Heart left ventricle (tissue), 16 donors: ENCODE measurements at regions of chr7 and their contacts with region 1.

Region 1: GRCh38 chr7:44240983-44241510 is 40.3 kb downstream of the YKT6 start:
- DNase-seq: peak; percentile 73 to 84 (median 78)
- ATAC-seq: peak; percentile 67 to 85 (median 80)
- H3K4me3 ChIP-seq: peak overlapping the region in 3 of 12 donors; percentile 5 to 28 (median 15)
- H3K27ac ChIP-seq: no peak overlapping the region
- H3K4me1 ChIP-seq: peaks cover 0 to 17% (median 0%) of the 10 kb centered on the region in 12 donors
- H3K27me3 ChIP-seq: no peaks in the 10 kb centered on the region
- CTCF ChIP-seq: peak; percentile 49 to 79 (median 68)
- POLR2A ChIP-seq: no peak

Region 2: GRCh38 chr7:43199371-43200160 is 1041.5 kb before region 1 on chr7:
- intact Hi-C with region 1: no loop called
- DNase-seq: no peak
- ATAC-seq: no peak
- H3K4me3 ChIP-seq: no peak overlapping the region
- H3K27ac ChIP-seq: no peak overlapping the region
- H3K4me1 ChIP-seq: no peaks in the 10 kb centered on the region
- H3K27me3 ChIP-seq: peaks cover 0 to 21% (median 7%) of the 10 kb centered on the region in 9 donors
- CTCF ChIP-seq: no peak
- POLR2A ChIP-seq: no peak

Region 3: DNA sequence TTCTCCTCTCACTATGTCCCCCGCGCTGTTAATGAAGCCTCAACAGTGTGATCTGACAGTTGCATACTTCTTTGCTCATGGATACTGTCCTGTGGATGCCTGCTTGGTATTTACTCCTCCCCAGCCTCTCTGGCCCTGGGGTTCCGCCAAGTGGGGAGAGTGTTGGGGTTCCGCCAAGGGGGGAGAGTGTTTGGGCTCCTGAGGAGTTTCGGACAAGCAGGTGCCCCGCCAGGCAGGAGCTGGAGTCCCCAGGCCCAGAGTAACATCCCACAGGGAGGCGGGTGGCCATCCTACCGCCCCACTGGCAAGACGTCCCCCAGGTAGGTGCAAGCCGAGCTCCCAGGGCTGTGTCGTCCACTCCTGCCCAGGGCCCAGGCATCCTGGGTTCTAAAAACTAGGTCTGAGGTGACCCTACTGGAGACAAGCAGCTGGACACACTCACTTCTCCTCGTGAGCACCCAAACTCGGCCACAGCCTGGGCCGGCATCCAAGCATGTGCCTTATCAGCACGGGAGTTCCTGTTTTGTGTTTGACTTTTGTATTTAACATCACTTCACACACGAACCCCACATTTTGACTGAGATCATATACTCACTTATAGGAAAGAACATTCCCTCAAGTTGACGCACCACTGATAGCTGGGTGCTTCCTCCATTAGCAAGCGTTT is 50.2 kb after region 1 on chr7:
- intact Hi-C with region 1: loop called in 1 of 10 experiments (anchors 5 kb)
- DNase-seq: peak; percentile 77 to 89 (median 88)
- ATAC-seq: peak; percentile 62 to 83 (median 69)
- H3K4me3 ChIP-seq: no peak overlapping the region
- H3K27ac ChIP-seq: peak overlapping the region; percentile 62 to 92 (median 82)
- H3K4me1 ChIP-seq: peaks cover 0 to 76% (median 49%) of the 10 kb centered on the region in 12 donors
- H3K27me3 ChIP-seq: peaks cover 0 to 4% (median 0%) of the 10 kb centered on the region in 9 donors
- CTCF ChIP-seq: no peak
- POLR2A ChIP-seq: no peak

Region 4: DNA sequence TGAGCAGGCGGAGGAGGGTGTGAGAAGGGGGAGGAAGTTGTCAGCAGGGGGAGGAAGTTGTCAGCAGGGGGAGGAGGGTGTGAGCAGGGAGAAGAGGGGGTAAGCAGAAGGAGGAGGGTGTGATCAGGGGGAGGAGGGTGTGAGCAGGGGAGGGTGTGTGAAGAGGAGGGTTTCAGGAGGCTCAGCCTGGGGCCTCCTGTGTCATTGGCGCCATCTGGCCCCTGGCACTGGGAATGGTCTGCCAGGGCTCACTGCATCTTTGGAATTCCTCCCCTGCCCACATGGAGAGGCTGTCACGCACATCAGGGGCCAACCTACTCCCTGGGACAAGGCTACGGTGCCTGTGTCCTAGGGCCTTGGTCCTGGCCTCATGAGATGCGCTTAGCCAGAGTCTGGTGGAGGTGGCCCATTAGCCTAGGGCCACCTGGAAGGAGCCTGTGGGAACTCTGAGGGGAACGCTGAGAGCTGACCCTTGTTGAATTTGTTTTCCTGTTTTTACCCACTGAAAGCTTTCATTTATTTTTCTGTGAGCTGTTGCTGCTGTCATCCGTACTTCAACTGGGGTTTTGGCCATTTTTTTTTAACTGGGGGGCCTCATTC is 66.4 kb after region 1 on chr7:
- intact Hi-C with region 1: loop called (anchors 2 to 5 kb)
- DNase-seq: peak in 3 of 5 donors; percentile 61 to 76 (median 76)
- ATAC-seq: peak; percentile 74 to 86 (median 76)
- H3K4me3 ChIP-seq: no peak overlapping the region
- H3K27ac ChIP-seq: peak overlapping the region in 6 of 12 donors; percentile 40 to 89 (median 58)
- H3K4me1 ChIP-seq: peaks cover 4 to 42% (median 19%) of the 10 kb centered on the region in 12 donors
- H3K27me3 ChIP-seq: peaks cover 0 to 24% (median 0%) of the 10 kb centered on the region in 9 donors
- CTCF ChIP-seq: peak in 8 of 12 donors; percentile 33 to 47 (median 42)
- POLR2A ChIP-seq: no peak

Region 5: DNA sequence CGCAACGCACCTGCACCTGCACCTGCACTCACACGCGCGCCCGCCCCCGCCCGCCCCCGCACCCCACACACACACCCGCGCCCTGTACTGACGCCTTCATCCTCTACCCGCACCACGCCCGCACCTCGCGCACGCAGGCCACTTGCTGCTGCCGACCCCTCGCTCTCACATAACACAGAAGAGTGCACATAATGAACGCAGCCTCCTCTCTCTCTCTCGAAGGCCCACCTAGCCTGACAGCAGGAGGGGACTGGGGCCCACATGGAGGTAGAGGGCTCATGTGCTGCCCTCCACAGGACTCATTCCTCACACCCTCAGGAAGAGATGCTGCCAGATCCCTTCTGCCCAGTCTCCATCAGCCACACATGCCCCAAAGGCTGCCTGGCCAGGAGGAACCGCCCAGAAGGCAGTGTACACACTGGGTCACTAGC is 84.8 kb after region 1 on chr7:
- intact Hi-C with region 1: loop called in 1 of 10 experiments (anchors 5 kb)
- DNase-seq: no peak
- ATAC-seq: peak; percentile 20 to 34 (median 24)
- H3K4me3 ChIP-seq: peak overlapping the region in 9 of 12 donors; percentile 7 to 58 (median 37)
- H3K27ac ChIP-seq: peak overlapping the region in 2 of 12 donors; percentile 38 to 91
- H3K4me1 ChIP-seq: peaks cover 0 to 51% (median 7%) of the 10 kb centered on the region in 12 donors
- H3K27me3 ChIP-seq: peaks cover 0 to 25% (median 4%) of the 10 kb centered on the region in 9 donors
- CTCF ChIP-seq: peak in 2 of 12 donors; percentile 27 to 31
- POLR2A ChIP-seq: no peak

Region 6: GRCh38 chr7:44477063-44477830 is 236.2 kb after region 1 on chr7:
- intact Hi-C with region 1: loop called (anchors 1 to 5 kb)
- DNase-seq: peak in 4 of 5 donors; percentile 38 to 62 (median 41)
- ATAC-seq: peak; percentile 86 to 89 (median 88)
- H3K4me3 ChIP-seq: no peak overlapping the region
- H3K27ac ChIP-seq: peak overlapping the region in 11 of 12 donors; percentile 19 to 68 (median 39)
- H3K4me1 ChIP-seq: peaks cover 6 to 62% (median 23%) of the 10 kb centered on the region in 12 donors
- H3K27me3 ChIP-seq: no peaks in the 10 kb centered on the region
- CTCF ChIP-seq: peak; percentile 77 to 94 (median 89)
- POLR2A ChIP-seq: no peak

Region 7: GRCh38 chr7:44565097-44565794 is 324.2 kb after region 1 on chr7:
- intact Hi-C with region 1: loop called in 9 of 10 experiments (anchors 1 to 10 kb)
- DNase-seq: peak; percentile 50 to 86 (median 73)
- ATAC-seq: peak; percentile 73 to 91 (median 88)
- H3K4me3 ChIP-seq: no peak overlapping the region
- H3K27ac ChIP-seq: peak overlapping the region in 1 of 12 donors; percentile 37
- H3K4me1 ChIP-seq: peaks cover 0 to 11% (median 1%) of the 10 kb centered on the region in 12 donors
- H3K27me3 ChIP-seq: no peaks in the 10 kb centered on the region
- CTCF ChIP-seq: peak; percentile 92 to 99 (median 97)
- POLR2A ChIP-seq: no peak